MCF 10A (cell line): ENCODE measurements at regions of chr5 and their contacts with region 1.

Region 1: DNA sequence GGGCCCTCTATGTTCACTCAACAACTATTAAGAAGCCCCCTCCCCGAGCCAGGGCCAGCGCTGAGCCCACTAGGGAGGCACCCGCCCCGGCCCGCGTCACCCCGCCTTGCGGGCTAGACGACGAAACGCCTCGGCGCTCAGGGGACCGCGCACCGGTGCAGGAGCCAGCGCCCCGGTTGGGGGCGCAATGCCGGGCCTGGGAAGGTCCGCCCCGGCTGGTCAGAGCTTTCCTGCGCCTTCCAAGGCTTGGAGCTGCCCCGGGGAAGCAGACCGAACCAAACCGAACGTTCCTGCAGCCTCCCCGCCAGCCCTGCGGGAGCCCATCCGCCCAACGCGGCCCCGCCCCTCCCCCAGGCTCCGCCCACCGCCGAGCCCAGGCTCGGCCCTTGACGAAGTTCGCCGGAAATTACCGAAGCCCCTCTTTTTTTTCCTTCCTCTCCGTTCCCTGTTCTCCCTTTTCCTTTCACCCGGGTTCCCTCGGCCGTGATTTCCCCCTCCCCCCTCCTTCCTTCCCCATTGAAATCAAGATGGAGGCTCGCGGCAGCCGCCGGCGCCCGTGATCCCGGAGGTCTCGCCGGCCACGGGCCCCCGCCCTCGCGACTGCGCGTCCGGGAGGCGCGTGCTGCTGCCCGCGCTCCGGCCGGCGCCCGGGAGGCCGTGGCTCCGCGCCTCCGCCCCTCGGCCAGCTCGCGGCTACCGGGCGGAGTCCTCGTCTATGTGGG is at the start of gene TRIO:
- DNase-seq: peak; percentile 91
- H3K4me3 Mint-ChIP-seq: peak within 1 kb of the TSS; percentile 89
- H3K27ac Mint-ChIP-seq: peak within 1 kb of the TSS; percentile 62
- H3K4me1 Mint-ChIP-seq: peaks cover 23% of the 10 kb centered on the region
- H3K27me3 Mint-ChIP-seq: peaks cover 12% of the 10 kb centered on the region
- CTCF ChIP-seq: peak; percentile 60
- total RNA-seq, gene TRIO: 134 and 136 TPM in 2 replicates

Region 2: GRCh38 chr5:14011089-14012004 is 131.6 kb before region 1 on chr5:
- CTCF ChIA-PET with region 1: no interaction called
- POLR2A ChIA-PET with region 1: interaction called, 4 read pairs
- intact Hi-C with region 1: loop called (anchors 1 kb)
- DNase-seq: peak; percentile 81
- H3K4me3 Mint-ChIP-seq: peak overlapping the region; percentile 70
- H3K27ac Mint-ChIP-seq: no peak overlapping the region
- H3K4me1 Mint-ChIP-seq: no peaks in the 10 kb centered on the region
- H3K27me3 Mint-ChIP-seq: no peaks in the 10 kb centered on the region
- CTCF ChIP-seq: no peak

Region 3: DNA sequence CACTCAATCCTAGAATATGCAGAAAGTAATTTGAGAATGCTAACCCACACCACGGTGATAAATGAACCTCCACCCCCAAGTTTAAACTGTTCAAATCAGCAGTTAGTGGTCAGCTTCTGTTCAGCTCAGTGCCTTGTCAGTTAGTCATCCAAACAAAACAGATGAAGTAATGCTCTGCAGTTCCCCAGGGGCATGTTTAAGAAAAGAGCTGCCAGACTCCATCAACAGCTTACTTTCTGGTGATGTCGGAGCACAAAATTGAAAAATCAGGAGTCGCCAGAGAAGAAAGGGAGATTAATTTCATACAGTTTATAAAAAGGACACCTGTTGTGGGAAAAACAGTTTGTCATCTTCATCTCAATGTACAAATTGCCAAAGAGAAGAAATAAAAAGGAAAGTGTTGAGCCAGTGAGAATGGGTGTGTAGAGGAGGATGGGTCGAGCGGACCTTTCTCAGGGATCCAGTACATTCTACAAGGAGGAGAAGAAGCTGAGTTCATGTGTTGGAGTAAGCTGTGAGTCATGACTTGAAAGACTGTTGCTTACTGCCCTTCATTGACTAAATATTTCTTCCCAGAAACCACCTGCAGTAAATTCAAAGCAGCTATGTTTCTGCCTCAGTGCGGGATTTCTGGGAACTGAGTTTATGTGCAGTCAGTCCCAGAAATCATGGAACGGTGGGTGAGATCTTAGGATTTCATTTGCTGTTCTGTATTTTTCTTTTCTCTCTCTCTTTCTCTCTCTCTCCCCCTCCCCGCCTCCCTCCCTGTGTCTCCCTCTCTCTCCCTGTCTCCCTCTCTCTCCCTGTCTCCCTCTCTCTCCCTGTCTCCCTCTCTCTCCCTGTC is 13.9 kb after region 1 on chr5:
- CTCF ChIA-PET with region 1: interaction called, 6 read pairs
- POLR2A ChIA-PET with region 1: interaction called, 92 read pairs
- intact Hi-C with region 1: loop called (anchors 1 kb)
- DNase-seq: peak; percentile 93
- H3K4me3 Mint-ChIP-seq: no peak overlapping the region
- H3K27ac Mint-ChIP-seq: no peak overlapping the region
- H3K4me1 Mint-ChIP-seq: peaks cover 29% of the 10 kb centered on the region
- H3K27me3 Mint-ChIP-seq: no peaks in the 10 kb centered on the region
- CTCF ChIP-seq: no peak

Region 4: DNA sequence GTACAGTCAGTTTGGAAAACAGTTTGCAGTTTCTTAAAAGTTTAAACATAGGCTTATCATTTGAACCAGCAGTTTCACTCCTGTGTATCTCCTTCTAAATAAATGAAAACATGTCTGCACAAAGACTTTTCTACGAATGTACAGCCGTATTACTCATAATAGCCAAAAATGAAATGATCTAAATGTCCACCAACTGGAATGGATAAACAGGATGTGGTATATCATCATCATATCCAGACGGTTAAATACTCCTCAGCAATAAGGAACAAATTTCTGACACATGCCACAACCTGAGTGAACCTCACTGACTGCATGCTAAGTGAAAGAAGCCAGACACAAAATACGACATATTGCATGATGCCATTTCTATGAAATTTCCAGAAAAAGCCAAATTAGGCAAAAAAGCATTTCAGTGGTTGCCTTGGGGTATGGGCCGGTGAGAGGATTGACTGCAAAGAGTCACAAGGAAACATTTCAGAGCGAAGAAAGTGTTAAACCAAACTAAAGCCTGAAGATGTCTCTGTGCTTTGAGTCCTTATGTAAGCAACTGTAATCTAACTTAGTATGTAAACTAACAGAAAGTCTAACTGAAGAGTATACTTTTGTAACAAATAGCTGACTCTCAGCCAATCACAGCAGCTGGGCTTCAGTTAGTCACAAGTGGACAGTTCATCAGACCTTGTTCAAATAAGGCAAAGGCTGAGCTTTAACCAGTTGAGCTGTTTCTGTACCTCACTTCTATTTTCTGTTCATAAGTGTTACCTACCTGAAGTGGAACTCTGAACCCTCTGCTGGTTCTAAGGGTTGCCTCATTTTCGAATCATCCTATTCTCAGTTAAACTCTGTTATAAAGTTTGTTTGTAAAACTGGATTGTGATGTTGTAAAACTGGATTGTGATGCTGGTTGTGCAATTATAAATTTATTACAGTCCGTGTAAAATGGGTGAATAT is 65.4 kb after region 1 on chr5:
- CTCF ChIA-PET with region 1: interaction called, 3 read pairs
- POLR2A ChIA-PET with region 1: interaction called, 18 read pairs
- intact Hi-C with region 1: loop called (anchors 2 kb)
- DNase-seq: peak; percentile 58
- H3K4me3 Mint-ChIP-seq: peak overlapping the region; percentile 55
- H3K27ac Mint-ChIP-seq: peak overlapping the region; percentile 89
- H3K4me1 Mint-ChIP-seq: peaks cover 56% of the 10 kb centered on the region
- H3K27me3 Mint-ChIP-seq: no peaks in the 10 kb centered on the region
- CTCF ChIP-seq: no peak

Region 5: DNA sequence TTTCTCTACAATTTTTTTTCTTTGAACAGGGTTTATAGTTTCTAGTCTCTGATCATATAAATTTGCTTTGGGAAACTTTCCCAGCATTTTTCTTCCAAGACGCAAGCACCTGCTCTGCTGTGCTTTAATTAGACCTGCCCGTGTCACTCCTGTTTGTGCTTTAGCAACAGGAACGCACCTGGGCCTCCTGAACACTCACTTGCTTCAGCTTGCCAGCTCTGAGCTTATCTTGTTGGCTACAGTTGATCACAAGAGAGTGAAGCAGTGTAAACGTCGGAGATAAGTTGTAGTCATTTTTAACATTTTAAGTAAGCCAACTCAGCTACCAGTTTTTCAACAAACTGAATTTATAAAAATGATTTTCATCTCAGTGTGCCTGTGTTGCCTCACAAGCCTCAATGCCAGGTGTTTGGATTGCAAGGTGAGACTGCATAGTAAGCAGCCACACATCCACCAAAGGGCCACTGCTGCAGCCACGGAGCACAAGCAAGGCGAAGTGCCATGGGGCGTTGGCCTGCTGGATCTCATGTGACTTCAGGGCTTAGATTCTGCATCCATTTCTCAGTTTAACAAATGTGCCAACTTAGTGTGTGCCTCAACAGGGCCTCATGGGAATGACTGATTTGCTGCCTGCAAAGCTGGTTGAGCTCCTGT is 167.0 kb after region 1 on chr5:
- CTCF ChIA-PET with region 1: no interaction called
- POLR2A ChIA-PET with region 1: no interaction called
- intact Hi-C with region 1: no loop called
- DNase-seq: no peak
- H3K4me3 Mint-ChIP-seq: no peak overlapping the region
- H3K27ac Mint-ChIP-seq: no peak overlapping the region
- H3K4me1 Mint-ChIP-seq: peaks cover 3% of the 10 kb centered on the region
- H3K27me3 Mint-ChIP-seq: no peaks in the 10 kb centered on the region
- CTCF ChIP-seq: no peak